ENCODE measurements at regions of chr12 and their contacts with region 1.

Region 1: DNA sequence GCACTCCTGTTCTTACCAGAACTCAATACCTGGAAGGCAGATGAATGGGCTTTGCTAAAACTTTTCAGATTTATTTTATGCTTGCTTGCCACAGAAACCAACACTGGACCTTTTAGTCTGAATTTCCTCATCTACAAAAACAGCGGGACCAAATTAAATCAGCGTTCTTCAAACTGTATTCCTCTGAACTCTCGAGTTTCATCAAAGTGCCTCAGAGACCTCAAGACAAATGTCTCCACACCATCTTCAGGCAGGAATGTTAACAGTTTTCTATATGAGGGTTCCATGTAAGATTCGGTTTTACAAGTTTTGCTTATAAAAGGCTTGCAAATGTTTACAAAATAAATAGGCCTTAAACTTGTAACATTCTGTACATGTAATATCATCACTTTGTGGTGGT is 74.6 kb downstream of the MED13L start:
- DNase-seq: no peak
- ATAC-seq: no peak
- H3K4me3 ChIP-seq: no peak overlapping the region
- H3K27ac ChIP-seq: no peak overlapping the region
- H3K4me1 ChIP-seq: peaks cover 8% of the 10 kb centered on the region
- H3K27me3 ChIP-seq: no peaks in the 10 kb centered on the region
- CTCF ChIP-seq: no peak

Region 2: DNA sequence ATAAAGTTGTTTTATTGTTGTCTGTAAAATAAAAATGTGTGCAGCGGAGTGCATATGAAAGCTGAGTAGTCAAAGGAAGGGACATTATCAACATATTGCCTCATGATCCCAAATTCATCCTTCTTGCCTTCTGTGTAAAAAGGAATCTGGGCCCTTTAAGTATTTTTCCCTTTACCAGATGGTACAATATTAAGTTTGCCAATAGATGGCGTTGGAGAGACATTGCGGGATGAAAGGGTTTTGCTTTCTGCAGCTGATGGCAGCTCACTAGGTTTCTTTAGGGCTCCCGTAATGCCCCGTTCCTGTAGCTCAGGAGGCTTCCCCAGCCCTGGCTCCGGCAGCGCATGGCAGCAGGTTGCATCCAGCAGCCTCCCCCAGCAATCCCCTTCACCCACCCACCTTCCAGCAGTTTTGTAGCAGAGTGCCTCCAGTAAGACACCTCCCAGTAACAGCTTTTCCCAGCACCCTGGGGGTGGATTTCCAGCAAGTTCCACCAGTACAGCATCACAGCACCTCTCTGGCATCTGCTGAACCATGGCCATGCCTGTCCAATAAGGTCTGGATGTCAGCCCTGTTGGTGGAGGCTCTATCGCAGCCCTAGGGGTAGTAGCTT is 279.9 kb before region 1 on chr12:
- CTCF ChIA-PET with region 1: no interaction called
- POLR2A ChIA-PET with region 1: no interaction called
- intact Hi-C with region 1: no loop called
- DNase-seq: peak; percentile 48
- ATAC-seq: no peak
- H3K4me3 ChIP-seq: no peak overlapping the region
- H3K27ac ChIP-seq: no peak overlapping the region
- H3K4me1 ChIP-seq: no peaks in the 10 kb centered on the region
- H3K27me3 ChIP-seq: peaks cover 24% of the 10 kb centered on the region; the same call in 1 of the 2 replicates
- CTCF ChIP-seq: peak; percentile 48

Region 3: DNA sequence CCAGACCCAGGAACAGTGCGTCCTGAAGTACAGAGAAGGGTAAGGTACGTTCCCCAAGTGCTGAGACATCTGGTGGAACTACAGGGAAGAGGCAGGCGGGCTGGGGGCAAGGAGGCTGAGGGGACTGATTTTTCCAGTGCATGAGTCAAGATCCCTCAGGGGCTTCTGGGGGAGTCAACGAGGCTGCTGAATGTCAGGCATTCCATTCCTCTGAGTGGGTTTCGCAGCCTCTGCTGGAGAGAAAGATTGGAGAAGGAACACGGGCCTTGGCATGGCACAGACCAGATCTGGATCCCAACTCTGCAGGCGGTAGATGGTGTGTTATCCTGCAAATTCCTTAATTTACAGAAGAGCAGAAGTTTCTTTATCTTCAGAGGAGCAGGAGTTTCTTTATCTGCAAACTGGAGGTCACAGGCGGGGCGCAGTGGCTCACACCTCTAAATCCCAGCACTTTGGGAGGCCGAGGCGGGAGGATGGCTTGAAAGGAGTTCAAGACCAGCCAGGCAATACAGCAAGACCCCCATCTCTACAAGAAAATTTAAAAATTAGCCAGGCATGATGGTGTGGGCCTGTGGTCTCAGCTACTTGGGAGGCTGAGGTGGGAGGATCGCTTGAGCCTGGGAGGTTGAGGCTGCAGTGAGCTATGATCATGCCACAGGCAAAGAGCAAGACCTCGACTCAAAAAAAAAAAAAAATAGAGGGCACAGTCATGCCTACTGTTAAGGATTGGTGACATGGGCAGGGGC is 223.6 kb after region 1 on chr12:
- CTCF ChIA-PET with region 1: no interaction called
- POLR2A ChIA-PET with region 1: no interaction called
- intact Hi-C with region 1: no loop called
- DNase-seq: peak; percentile 99
- ATAC-seq: peak; percentile 95
- H3K4me3 ChIP-seq: no peak overlapping the region
- H3K27ac ChIP-seq: peak overlapping the region; percentile 76
- H3K4me1 ChIP-seq: peaks cover 29% of the 10 kb centered on the region
- H3K27me3 ChIP-seq: no peaks in the 10 kb centered on the region
- CTCF ChIP-seq: peak; percentile 71

Region 4: GRCh38 chr12:116687888-116688287 is 484.9 kb after region 1 on chr12:
- CTCF ChIA-PET with region 1: interaction called, 12 read pairs
- POLR2A ChIA-PET with region 1: no interaction called
- intact Hi-C with region 1: no loop called
- DNase-seq: peak; percentile 42
- ATAC-seq: peak; percentile 77
- H3K4me3 ChIP-seq: no peak overlapping the region
- H3K27ac ChIP-seq: no peak overlapping the region
- H3K4me1 ChIP-seq: no peaks in the 10 kb centered on the region
- H3K27me3 ChIP-seq: no peaks in the 10 kb centered on the region
- CTCF ChIP-seq: peak; percentile 69

Measured in PC-3 (cell line).